ENCODE measurements at regions of chr7 and their contacts with region 1.

Region 1: GRCh38 chr7:35694781-35695472 is at the start of gene HERPUD2:
- DNase-seq: peak; percentile 95
- ATAC-seq: peak; percentile 82
- H3K4me3 Mint-ChIP-seq: peak within 1 kb of the TSS; percentile 96
- H3K27ac Mint-ChIP-seq: peak within 1 kb of the TSS; percentile 93
- H3K4me1 Mint-ChIP-seq: peaks cover 30% of the 10 kb centered on the region
- H3K27me3 Mint-ChIP-seq: no peaks in the 10 kb centered on the region
- total RNA-seq, gene HERPUD2: 47.0 to 49.4 TPM

Region 2: GRCh38 chr7:35707422-35707821 is 12.5 kb after region 1 on chr7:
- CTCF ChIA-PET with region 1: interaction called, 59 read pairs
- DNase-seq: no peak
- ATAC-seq: no peak
- H3K4me3 Mint-ChIP-seq: no peak overlapping the region
- H3K27ac Mint-ChIP-seq: no peak overlapping the region
- H3K4me1 Mint-ChIP-seq: peaks cover 32% of the 10 kb centered on the region
- H3K27me3 Mint-ChIP-seq: peaks cover 8% of the 10 kb centered on the region